PC-9 (cell line): ENCODE measurements at regions of chr9 and their contacts with region 1.

Region 1: GRCh38 chr9:130090915-130091314 is 37.2 kb downstream of the GPR107 start:
- DNase-seq: no peak
- H3K4me3 ChIP-seq: no peak overlapping the region
- H3K27ac ChIP-seq: no peak overlapping the region
- H3K4me1 ChIP-seq: no peaks in the 10 kb centered on the region
- H3K27me3 ChIP-seq: no peaks in the 10 kb centered on the region
- CTCF ChIP-seq: no peak

Region 2: GRCh38 chr9:129641746-129642513 is 449.0 kb before region 1 on chr9 and contains the start of gene ASB6:
- CTCF ChIA-PET with region 1: no interaction called
- POLR2A ChIA-PET with region 1: no interaction called
- intact Hi-C with region 1: loop called (anchors 5 kb)
- DNase-seq: peak; percentile 81 to 100
- H3K4me3 ChIP-seq: peak within 1 kb of the TSS; percentile 96
- H3K27ac ChIP-seq: no peak within 1 kb of the TSS
- H3K4me1 ChIP-seq: peaks cover 8% of the 10 kb centered on the region
- H3K27me3 ChIP-seq: no peaks in the 10 kb centered on the region
- CTCF ChIP-seq: peak; percentile 96
- total RNA-seq, gene ASB6: 19.3 and 20.2 TPM in 2 replicates

Region 3: DNA sequence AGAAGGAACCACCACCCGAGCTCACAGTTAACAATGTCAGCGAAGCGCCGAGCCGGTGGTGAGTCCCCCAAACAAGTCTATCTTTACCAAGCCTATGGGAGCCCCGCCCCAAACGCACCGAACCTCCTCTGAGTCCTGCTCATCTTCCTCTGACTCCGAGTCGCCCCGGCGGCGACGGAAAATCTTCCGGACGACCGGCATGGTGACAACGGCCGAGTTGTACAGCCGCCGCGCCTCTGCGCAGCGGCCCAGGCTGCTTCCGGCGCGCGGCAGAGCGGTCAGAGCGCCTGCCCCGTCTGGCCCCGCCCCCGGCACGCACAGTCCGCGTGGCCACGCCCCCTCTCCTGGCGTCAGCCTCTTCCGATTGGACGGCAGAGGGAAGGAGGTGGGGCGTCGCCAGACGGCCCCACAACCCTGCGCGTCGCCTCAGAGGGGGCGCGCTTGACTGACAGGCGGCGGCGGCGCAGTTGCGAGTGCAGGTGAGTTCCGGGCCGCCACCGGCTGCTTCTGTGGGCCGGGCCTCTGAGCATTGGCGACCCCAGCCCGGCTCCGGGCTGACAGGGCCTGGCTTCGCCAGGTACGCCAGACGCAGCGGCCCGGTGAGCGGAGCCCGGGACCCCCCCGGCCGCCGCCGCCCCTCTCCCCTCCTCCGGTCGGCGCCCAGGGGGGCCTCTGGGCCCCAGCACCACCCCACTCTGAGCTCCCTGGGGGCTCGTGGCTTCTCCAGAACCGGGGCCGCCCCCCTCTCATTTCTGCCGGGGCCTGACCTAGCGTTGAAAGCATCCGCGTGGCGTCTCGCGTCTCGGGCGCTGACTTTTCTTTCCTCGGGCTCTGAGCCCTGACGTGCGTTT is 255.7 kb before region 1 on chr9 and contains the starts of genes C9orf78 and USP20:
- CTCF ChIA-PET with region 1: no interaction called
- POLR2A ChIA-PET with region 1: no interaction called
- intact Hi-C with region 1: loop called (anchors 5 kb)
- DNase-seq: peak; percentile 84 to 98
- H3K4me3 ChIP-seq: peak within 1 kb of the TSS; percentile 78
- H3K27ac ChIP-seq: no peak within 1 kb of the TSS
- H3K4me1 ChIP-seq: peaks cover 15% of the 10 kb centered on the region
- H3K27me3 ChIP-seq: no peaks in the 10 kb centered on the region
- CTCF ChIP-seq: no peak
- total RNA-seq, gene C9orf78: 39.2 and 51.7 TPM in 2 replicates
- total RNA-seq, gene USP20: 22.1 and 27.8 TPM in 2 replicates

Region 4: DNA sequence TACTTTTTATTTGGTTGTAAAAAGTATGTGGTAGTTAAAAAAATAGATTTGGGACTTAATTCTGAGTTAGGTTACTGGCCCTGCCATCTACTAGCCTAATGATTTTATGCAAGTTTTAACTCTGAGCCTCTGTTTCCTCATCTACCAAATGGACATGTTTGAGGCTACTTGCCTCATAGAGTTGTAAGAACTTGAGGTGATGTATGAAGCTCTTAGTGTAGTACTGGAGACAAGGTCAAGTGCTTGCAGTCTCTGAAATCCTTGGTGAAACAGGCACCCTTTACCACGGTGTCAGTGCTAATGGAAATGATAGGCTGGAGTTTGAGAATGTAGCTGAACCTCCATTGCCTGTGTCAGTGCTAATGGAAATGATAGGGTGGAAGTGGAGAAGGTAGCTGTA is 21.9 kb before region 1 on chr9:
- CTCF ChIA-PET with region 1: no interaction called
- POLR2A ChIA-PET with region 1: no interaction called
- intact Hi-C with region 1: no loop called
- DNase-seq: no peak
- H3K4me3 ChIP-seq: no peak overlapping the region
- H3K27ac ChIP-seq: no peak overlapping the region
- H3K4me1 ChIP-seq: peaks cover 11% of the 10 kb centered on the region; the same call in 1 of the 2 replicates
- H3K27me3 ChIP-seq: no peaks in the 10 kb centered on the region
- CTCF ChIP-seq: no peak

Region 5: GRCh38 chr9:130128733-130129431 is 38.0 kb after region 1 on chr9:
- CTCF ChIA-PET with region 1: no interaction called
- POLR2A ChIA-PET with region 1: no interaction called
- intact Hi-C with region 1: no loop called
- DNase-seq: peak; percentile 52 to 83
- H3K4me3 ChIP-seq: 0 out of 2 replicates have a peak overlapping the region, but pooled peaks have one; percentile 13
- H3K27ac ChIP-seq: peak overlapping the region; percentile 80
- H3K4me1 ChIP-seq: peaks cover 46% of the 10 kb centered on the region
- H3K27me3 ChIP-seq: no peaks in the 10 kb centered on the region
- CTCF ChIP-seq: no peak